Naive thymus-derived CD4-positive, alpha-beta T cell (primary cell): ENCODE measurements at regions of chr19 and their contacts with region 1.

Region 1: GRCh38 chr19:19597809-19598306 is 20.6 kb downstream of the PBX4 start:
- DNase-seq: peak in 8 of 9 donors; percentile 54 to 90 (median 84)
- ATAC-seq: peak; percentile 87
- H3K4me3 ChIP-seq: peak overlapping the region; percentile 52
- H3K4me3 Mint-ChIP-seq: peak overlapping the region; percentile 61 to 85 (median 74)
- H3K27ac ChIP-seq: peak overlapping the region; percentile 96
- H3K27ac Mint-ChIP-seq: peak overlapping the region; percentile 90 to 99 (median 97)
- H3K4me1 ChIP-seq: peaks cover 53 to 54% of the 10 kb centered on the region in 2 donors
- H3K4me1 Mint-ChIP-seq: peaks cover 29 to 75% (median 66%) of the 10 kb centered on the region in 7 donors
- H3K27me3 ChIP-seq: no peaks in the 10 kb centered on the region
- H3K27me3 Mint-ChIP-seq: no peaks in the 10 kb centered on the region

Region 2: GRCh38 chr19:19618219-19619051 is 20.6 kb after region 1 on chr19 and contains the start of gene PBX4:
- CTCF ChIA-PET with region 1: no interaction called
- POLR2A ChIA-PET with region 1: interaction called, 36 read pairs
- intact Hi-C with region 1: loop called (anchors 1 kb)
- DNase-seq: peak; percentile 97 to 99 (median 99)
- ATAC-seq: peak; percentile 99
- H3K4me3 ChIP-seq: peak within 1 kb of the TSS; percentile 86
- H3K4me3 Mint-ChIP-seq: peak within 1 kb of the TSS; percentile 79 to 99 (median 90)
- H3K27ac ChIP-seq: peak within 1 kb of the TSS; percentile 82
- H3K27ac Mint-ChIP-seq: peak within 1 kb of the TSS; percentile 80 to 98 (median 94)
- H3K4me1 ChIP-seq: peaks cover 16 to 23% of the 10 kb centered on the region in 2 donors
- H3K4me1 Mint-ChIP-seq: peaks cover 34 to 50% (median 45%) of the 10 kb centered on the region in 7 donors
- H3K27me3 ChIP-seq: no peaks in the 10 kb centered on the region
- H3K27me3 Mint-ChIP-seq: no peaks in the 10 kb centered on the region
- total RNA-seq, gene PBX4: 22.6 to 42.7 (median 42.0) TPM